ENCODE measurements at regions of chr20 and their contacts with region 1.

Region 1: GRCh38 chr20:34768096-34768495 is 57.4 kb downstream of the NCOA6 start:
- DNase-seq: no peak
- H3K4me3 ChIP-seq: no peak overlapping the region
- H3K4me1 ChIP-seq: no peaks in the 10 kb centered on the region
- H3K27me3 ChIP-seq: no peaks in the 10 kb centered on the region

Region 2: GRCh38 chr20:34190679-34191090 is 577.4 kb before region 1 on chr20:
- in situ Hi-C with region 1: loop called (anchors 10 kb)
- DNase-seq: peak; percentile 68 to 78
- H3K4me3 ChIP-seq: no peak overlapping the region
- H3K4me1 ChIP-seq: no peaks in the 10 kb centered on the region
- H3K27me3 ChIP-seq: peaks cover 17% of the 10 kb centered on the region

Region 3: GRCh38 chr20:34549291-34549928 is 218.7 kb before region 1 on chr20:
- in situ Hi-C with region 1: no loop called
- DNase-seq: peak in 1 of 2 experiments; percentile 26
- H3K4me3 ChIP-seq: no peak overlapping the region
- H3K4me1 ChIP-seq: no peaks in the 10 kb centered on the region
- H3K27me3 ChIP-seq: no peaks in the 10 kb centered on the region